ENCODE measurements at regions of chr3 and their contacts with region 1.

Region 1: GRCh38 chr3:4633078-4634004 is 140.2 kb downstream of the ITPR1 start:
- DNase-seq: peak; percentile 37
- ATAC-seq: peak; percentile 88
- H3K4me3 ChIP-seq: no peak overlapping the region
- H3K27ac ChIP-seq: no peak overlapping the region
- H3K4me1 ChIP-seq: no peaks in the 10 kb centered on the region
- H3K27me3 ChIP-seq: peaks cover 13% of the 10 kb centered on the region; the same call in 1 of the 2 replicates
- CTCF ChIP-seq: peak; percentile 72 to 91 (median 83)
- POLR2A ChIP-seq: no peak
- RAD21 ChIP-seq: peak; percentile 85

Region 2: DNA sequence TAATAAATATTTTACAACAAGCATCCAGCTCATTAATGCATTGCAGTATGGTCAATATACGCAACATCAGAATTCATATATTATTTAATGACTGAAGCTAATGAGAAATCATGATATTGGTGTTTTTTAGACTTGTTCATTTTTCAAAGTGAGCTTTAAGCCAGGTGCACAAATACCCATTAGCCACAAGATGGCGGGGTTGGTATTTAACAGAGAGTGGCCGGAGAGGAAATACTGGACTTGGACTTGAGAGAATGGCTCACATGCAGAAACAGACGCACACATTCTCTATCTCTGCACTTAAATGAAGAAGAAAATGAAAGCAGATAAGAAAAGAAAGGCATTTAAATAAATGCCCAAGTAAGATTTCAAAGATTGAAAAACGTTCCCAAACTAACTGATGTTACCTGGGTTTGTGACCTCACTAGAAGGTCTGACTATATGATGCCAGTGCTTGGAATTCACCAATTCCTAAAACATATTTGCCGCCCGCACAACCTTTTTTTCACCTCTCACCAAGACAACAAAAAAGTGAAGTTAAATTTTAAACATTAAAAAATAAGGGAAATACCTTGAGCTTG is 1432.6 kb before region 1 on chr3:
- CTCF ChIA-PET with region 1: no interaction called
- POLR2A ChIA-PET with region 1: no interaction called
- RAD21 ChIA-PET with region 1: no interaction called
- intact Hi-C with region 1: loop called (anchors 2 kb)
- DNase-seq: peak; percentile 31
- ATAC-seq: peak; percentile 67; the same call in 1 of the 2 replicates
- H3K4me3 ChIP-seq: no peak overlapping the region
- H3K27ac ChIP-seq: no peak overlapping the region
- H3K4me1 ChIP-seq: no peaks in the 10 kb centered on the region
- H3K27me3 ChIP-seq: no peaks in the 10 kb centered on the region
- CTCF ChIP-seq: peak; percentile 45 to 80 (median 72); a peak in 5 of 6 replicates
- POLR2A ChIP-seq: no peak
- RAD21 ChIP-seq: peak; percentile 75

Region 3: GRCh38 chr3:4290272-4290893 is 343.0 kb before region 1 on chr3:
- CTCF ChIA-PET with region 1: interaction called, 10 read pairs
- POLR2A ChIA-PET with region 1: no interaction called
- RAD21 ChIA-PET with region 1: no interaction called
- intact Hi-C with region 1: no loop called
- DNase-seq: no peak
- ATAC-seq: peak; percentile 69
- H3K4me3 ChIP-seq: no peak overlapping the region
- H3K27ac ChIP-seq: no peak overlapping the region
- H3K4me1 ChIP-seq: no peaks in the 10 kb centered on the region
- H3K27me3 ChIP-seq: peaks cover 36% of the 10 kb centered on the region
- CTCF ChIP-seq: peak; percentile 47 to 85 (median 78); a peak in 5 of 6 replicates
- POLR2A ChIP-seq: no peak
- RAD21 ChIP-seq: peak; percentile 71

Region 4: GRCh38 chr3:4334548-4334947 is 298.8 kb before region 1 on chr3:
- CTCF ChIA-PET with region 1: interaction called, 5 read pairs
- POLR2A ChIA-PET with region 1: no interaction called
- RAD21 ChIA-PET with region 1: no interaction called
- intact Hi-C with region 1: loop called (anchors 5 kb)
- DNase-seq: no peak
- ATAC-seq: 0 out of 2 replicates have a peak, but pooled peaks have one; percentile 52
- H3K4me3 ChIP-seq: no peak overlapping the region
- H3K27ac ChIP-seq: no peak overlapping the region
- H3K4me1 ChIP-seq: no peaks in the 10 kb centered on the region
- H3K27me3 ChIP-seq: no peaks in the 10 kb centered on the region
- CTCF ChIP-seq: peak in 2 of 3 experiments; percentile 9 to 38; a peak in 3 of 6 replicates
- POLR2A ChIP-seq: no peak
- RAD21 ChIP-seq: 0 out of 2 replicates have a peak, but pooled peaks have one; percentile 9

Region 5: DNA sequence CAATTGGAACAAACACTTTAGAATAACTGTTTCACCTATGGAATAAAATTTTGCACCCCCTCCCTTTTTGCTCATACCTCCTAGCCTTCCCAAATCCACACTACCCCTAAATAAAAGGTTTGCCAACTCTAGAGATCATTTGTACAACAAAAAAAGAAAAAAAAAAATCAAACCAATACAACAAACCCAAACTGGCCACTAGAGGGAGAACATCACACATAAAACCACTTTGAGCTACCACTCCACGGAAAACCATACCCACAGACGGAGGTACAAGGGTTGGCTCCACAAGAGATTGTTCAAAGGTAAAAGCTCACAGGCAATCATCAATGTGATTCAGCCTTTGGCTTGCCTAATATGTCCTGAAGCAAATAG is 282.6 kb before region 1 on chr3:
- CTCF ChIA-PET with region 1: interaction called, 83 read pairs
- POLR2A ChIA-PET with region 1: interaction called, 3 read pairs
- RAD21 ChIA-PET with region 1: interaction called, 4 to 10 read pairs
- intact Hi-C with region 1: loop called (anchors 1 kb)
- DNase-seq: peak; percentile 37
- ATAC-seq: peak; percentile 69
- H3K4me3 ChIP-seq: no peak overlapping the region
- H3K27ac ChIP-seq: no peak overlapping the region
- H3K4me1 ChIP-seq: no peaks in the 10 kb centered on the region
- H3K27me3 ChIP-seq: no peaks in the 10 kb centered on the region
- CTCF ChIP-seq: peak; percentile 64 to 76 (median 70)
- POLR2A ChIP-seq: no peak
- RAD21 ChIP-seq: peak; percentile 80

Region 6: GRCh38 chr3:4586381-4586780 is 47.0 kb before region 1 on chr3:
- CTCF ChIA-PET with region 1: no interaction called
- POLR2A ChIA-PET with region 1: no interaction called
- RAD21 ChIA-PET with region 1: no interaction called
- intact Hi-C with region 1: loop called (anchors 1 kb)
- DNase-seq: no peak
- ATAC-seq: no peak
- H3K4me3 ChIP-seq: no peak overlapping the region
- H3K27ac ChIP-seq: no peak overlapping the region
- H3K4me1 ChIP-seq: no peaks in the 10 kb centered on the region
- H3K27me3 ChIP-seq: no peaks in the 10 kb centered on the region; the same call in 1 of the 2 replicates
- CTCF ChIP-seq: no peak
- POLR2A ChIP-seq: no peak
- RAD21 ChIP-seq: no peak

Region 7: GRCh38 chr3:4978204-4978965 is 345.0 kb after region 1 on chr3:
- CTCF ChIA-PET with region 1: no interaction called
- POLR2A ChIA-PET with region 1: no interaction called
- RAD21 ChIA-PET with region 1: no interaction called
- intact Hi-C with region 1: no loop called
- DNase-seq: peak; percentile 94
- ATAC-seq: peak; percentile 68
- H3K4me3 ChIP-seq: peak overlapping the region; percentile 46 to 87
- H3K27ac ChIP-seq: peak overlapping the region; percentile 91
- H3K4me1 ChIP-seq: peaks cover 44 to 64% of the 10 kb centered on the region in 2 experiments
- H3K27me3 ChIP-seq: no peaks in the 10 kb centered on the region
- CTCF ChIP-seq: no peak
- POLR2A ChIP-seq: peak; percentile 60
- RAD21 ChIP-seq: no peak

Region 8: DNA sequence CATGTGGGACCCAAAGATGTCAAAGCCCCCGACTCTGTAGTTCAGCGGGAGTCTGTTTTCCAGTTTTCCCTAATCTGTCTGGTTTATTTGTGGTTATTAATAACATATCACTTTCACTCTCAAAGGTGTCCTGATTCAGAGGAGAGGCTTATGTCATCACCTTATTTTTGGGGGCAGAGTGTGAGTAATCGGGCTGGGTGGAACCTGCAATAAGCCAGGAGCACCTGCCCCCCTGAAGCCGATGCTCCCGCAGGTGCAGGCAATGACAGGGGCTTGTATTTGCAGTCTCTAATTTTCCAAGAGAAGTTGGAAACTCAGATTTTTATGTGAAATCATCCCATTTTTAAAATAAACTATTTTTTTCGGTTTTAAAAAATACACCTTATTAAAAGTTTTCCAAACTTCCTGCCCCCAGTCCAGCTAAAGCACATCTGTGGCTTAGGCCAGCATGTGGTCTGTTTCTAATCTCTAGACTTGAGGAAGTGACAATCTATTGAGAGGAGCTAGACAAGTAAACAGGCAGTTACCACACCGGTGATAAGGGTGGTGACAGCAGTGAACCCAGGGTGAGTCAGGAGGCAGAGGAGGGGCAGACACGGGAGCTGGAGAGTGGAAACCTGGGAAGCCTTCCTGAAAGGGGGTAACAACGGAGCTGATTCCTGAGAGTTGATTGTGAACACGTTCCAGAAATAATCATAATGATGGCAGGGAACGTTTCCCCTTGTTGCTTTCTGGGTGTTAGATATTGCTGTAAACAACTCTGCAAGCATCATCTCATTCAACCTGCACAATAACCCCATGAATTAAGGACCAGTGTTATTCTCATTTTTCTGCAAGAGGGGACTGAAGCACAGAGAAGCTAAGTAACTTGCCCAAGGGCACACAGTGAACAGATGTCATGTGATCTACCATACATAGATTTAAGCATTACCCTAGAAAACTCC is 383.1 kb after region 1 on chr3:
- CTCF ChIA-PET with region 1: no interaction called
- POLR2A ChIA-PET with region 1: no interaction called
- RAD21 ChIA-PET with region 1: no interaction called
- intact Hi-C with region 1: no loop called
- DNase-seq: peak; percentile 72
- ATAC-seq: peak; percentile 50
- H3K4me3 ChIP-seq: peak overlapping the region in 1 of 2 experiments; percentile 9; a peak in 1 of 4 replicates
- H3K27ac ChIP-seq: peak overlapping the region; percentile 1; the same call in 1 of the 2 replicates
- H3K4me1 ChIP-seq: peaks cover 61 to 99% of the 10 kb centered on the region in 2 experiments
- H3K27me3 ChIP-seq: no peaks in the 10 kb centered on the region
- CTCF ChIP-seq: no peak
- POLR2A ChIP-seq: no peak
- RAD21 ChIP-seq: no peak

Measured in HCT116 (cell line).